Ovary (tissue), 10 donors: ENCODE measurements at regions of chr2 and their contacts with region 1.

Region 1: DNA sequence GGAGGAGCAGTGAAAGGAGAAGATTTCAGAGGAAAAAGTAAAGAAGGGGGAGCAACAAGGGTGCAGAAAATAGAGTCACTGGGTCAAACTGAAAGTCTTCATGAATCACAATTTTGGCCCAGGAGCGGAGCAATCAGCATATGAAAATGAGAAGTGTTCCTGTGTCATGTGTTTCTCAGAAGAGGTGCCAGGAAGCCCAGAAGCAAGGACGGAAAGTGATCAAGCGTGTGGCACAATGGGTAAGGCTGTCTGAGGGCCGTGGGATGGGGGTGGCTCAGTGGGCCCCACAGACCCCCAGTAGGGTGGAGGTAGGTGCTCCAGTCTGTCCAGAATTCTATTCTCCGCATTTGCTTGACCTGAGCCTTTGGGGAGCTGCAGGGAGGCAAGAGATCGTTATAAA is 44.2 kb downstream of the SP140 start:
- DNase-seq: no peak
- H3K4me3 ChIP-seq: no peak overlapping the region
- H3K27ac ChIP-seq: no peak overlapping the region
- H3K4me1 ChIP-seq: no peaks in the 10 kb centered on the region
- H3K27me3 ChIP-seq: no peaks in the 10 kb centered on the region
- CTCF ChIP-seq: no peak
- EP300 ChIP-seq: no peak
- POLR2A ChIP-seq: no peak

Region 2: DNA sequence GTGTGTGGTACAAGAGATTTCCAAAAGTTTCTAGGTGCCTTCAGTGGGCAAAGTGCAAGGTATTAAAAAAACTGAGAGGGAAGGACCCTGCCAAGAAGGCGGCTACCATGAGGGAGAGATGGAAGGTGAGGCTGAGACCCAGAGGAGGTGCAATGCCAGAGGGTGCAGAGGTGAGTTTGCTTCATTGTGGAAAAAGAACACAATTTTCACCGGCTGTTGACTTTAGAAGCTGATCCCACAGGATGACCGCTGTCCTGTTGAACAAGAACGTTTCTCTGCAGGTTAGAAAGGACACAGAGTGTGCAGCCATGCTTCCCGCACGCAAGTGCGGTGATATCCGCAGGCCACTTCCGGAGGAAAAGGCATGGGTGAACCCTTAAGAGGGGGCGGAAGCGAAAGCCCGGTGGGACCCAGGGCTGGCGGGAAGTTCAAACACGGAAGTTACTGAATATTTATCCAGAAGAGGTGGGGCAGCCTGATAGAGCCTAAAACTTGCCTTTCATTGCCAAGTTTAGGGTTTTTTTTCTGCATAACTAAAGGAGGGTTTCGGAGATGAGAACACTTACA is 66.5 kb before region 1 on chr2:
- intact Hi-C with region 1: no loop called
- DNase-seq: no peak
- H3K4me3 ChIP-seq: no peak overlapping the region
- H3K27ac ChIP-seq: no peak overlapping the region
- H3K4me1 ChIP-seq: no peaks in the 10 kb centered on the region
- H3K27me3 ChIP-seq: no peaks in the 10 kb centered on the region
- CTCF ChIP-seq: no peak
- EP300 ChIP-seq: no peak
- POLR2A ChIP-seq: no peak

Region 3: GRCh38 chr2:230282936-230283335 is 13.2 kb after region 1 on chr2:
- intact Hi-C with region 1: loop called in 1 of 4 experiments (anchors 1 kb)
- DNase-seq: no peak
- H3K4me3 ChIP-seq: no peak overlapping the region
- H3K27ac ChIP-seq: no peak overlapping the region
- H3K4me1 ChIP-seq: no peaks in the 10 kb centered on the region
- H3K27me3 ChIP-seq: no peaks in the 10 kb centered on the region
- CTCF ChIP-seq: no peak
- EP300 ChIP-seq: no peak
- POLR2A ChIP-seq: no peak

Region 4: GRCh38 chr2:230828272-230828961 is 558.7 kb after region 1 on chr2:
- intact Hi-C with region 1: no loop called
- DNase-seq: no peak
- H3K4me3 ChIP-seq: no peak overlapping the region
- H3K27ac ChIP-seq: no peak overlapping the region
- H3K4me1 ChIP-seq: no peaks in the 10 kb centered on the region
- H3K27me3 ChIP-seq: no peaks in the 10 kb centered on the region
- CTCF ChIP-seq: no peak
- EP300 ChIP-seq: no peak
- POLR2A ChIP-seq: no peak